Dendritic cell treated with granulocyte-macrophage colony-stimulating factor and Interleukin-4, amounts not matched to agents 40 ng/mL and 50 ng/mL, for 4 days (primary cell): ENCODE measurements at regions of chr18 and their contacts with region 1.

Region 1: DNA sequence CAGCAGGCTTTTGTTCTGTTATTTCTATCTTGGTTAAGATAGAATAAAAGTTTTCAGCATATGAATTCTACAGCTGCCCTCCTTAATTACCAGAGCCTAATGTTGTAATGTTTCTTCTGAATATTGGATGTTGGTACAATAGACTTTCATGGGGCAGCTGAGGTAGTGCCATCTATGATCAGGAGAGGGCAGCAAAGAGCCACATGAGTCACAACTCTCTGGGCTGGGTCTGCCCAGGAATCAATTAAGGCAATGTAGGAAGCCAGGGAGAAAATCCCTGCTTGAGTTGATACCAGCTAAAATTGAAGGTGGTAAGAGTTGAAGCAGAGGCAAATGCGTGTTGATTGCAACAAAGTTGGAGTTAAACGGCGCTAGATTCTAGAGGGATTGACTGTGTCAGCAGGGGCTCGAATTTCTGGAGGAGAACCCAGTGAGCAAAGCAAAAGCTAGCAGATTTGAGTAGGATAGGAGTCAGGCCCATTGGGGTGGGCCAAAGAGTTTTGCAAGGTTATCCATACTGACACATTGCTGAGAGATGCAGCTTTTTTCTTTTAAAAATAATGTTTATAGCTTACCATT is 10.6 kb upstream of the MC5R start:
- H3K4me3 Mint-ChIP-seq: no peak overlapping the region
- H3K27ac Mint-ChIP-seq: no peak overlapping the region
- H3K4me1 Mint-ChIP-seq: no peaks in the 10 kb centered on the region
- H3K27me3 Mint-ChIP-seq: peaks cover 6% of the 10 kb centered on the region

Region 2: GRCh38 chr18:13548966-13549879 is 264.1 kb before region 1 on chr18:
- intact Hi-C with region 1: loop called (anchors 5 kb)
- H3K4me3 Mint-ChIP-seq: no peak overlapping the region
- H3K27ac Mint-ChIP-seq: peak overlapping the region; percentile 79
- H3K4me1 Mint-ChIP-seq: peaks cover 45% of the 10 kb centered on the region
- H3K27me3 Mint-ChIP-seq: peaks cover 9% of the 10 kb centered on the region

Region 3: DNA sequence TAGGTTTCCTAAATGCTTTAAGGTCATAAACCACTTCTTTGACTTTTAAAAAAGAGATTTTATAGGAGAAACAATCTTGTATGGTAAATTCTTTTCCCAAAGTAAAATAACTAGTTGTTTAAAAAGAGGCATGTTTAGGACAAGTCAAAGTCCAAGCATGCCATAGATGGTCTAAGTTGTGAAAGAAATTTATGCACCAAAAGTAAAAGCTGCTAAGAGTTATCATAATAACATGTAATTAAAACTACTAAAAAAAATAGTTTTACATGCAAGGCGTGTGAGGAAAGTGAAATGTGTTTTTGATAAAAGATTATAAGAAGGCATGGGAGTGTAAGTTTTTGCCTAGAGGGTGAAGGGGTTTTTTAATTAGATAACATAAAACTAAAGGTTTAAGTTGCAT is 109.5 kb before region 1 on chr18:
- intact Hi-C with region 1: no loop called
- H3K4me3 Mint-ChIP-seq: no peak overlapping the region
- H3K27ac Mint-ChIP-seq: no peak overlapping the region
- H3K4me1 Mint-ChIP-seq: peaks cover 5% of the 10 kb centered on the region
- H3K27me3 Mint-ChIP-seq: no peaks in the 10 kb centered on the region